ENCODE measurements at regions of chr19 and their contacts with region 1.

Region 1: GRCh38 chr19:45446941-45447340 is 20.9 kb upstream of the FOSB start:
- DNase-seq: peak; percentile 91
- H3K27ac ChIP-seq: peak overlapping the region; percentile 100
- CTCF ChIP-seq: no peak

Region 2: GRCh38 chr19:45469132-45469944 is 22.4 kb after region 1 on chr19:
- CTCF ChIA-PET with region 1: interaction called, 3 read pairs
- POLR2A ChIA-PET with region 1: interaction called, 11 read pairs
- DNase-seq: peak; percentile 94
- H3K27ac ChIP-seq: peak overlapping the region; percentile 96
- CTCF ChIP-seq: no peak

Region 3: DNA sequence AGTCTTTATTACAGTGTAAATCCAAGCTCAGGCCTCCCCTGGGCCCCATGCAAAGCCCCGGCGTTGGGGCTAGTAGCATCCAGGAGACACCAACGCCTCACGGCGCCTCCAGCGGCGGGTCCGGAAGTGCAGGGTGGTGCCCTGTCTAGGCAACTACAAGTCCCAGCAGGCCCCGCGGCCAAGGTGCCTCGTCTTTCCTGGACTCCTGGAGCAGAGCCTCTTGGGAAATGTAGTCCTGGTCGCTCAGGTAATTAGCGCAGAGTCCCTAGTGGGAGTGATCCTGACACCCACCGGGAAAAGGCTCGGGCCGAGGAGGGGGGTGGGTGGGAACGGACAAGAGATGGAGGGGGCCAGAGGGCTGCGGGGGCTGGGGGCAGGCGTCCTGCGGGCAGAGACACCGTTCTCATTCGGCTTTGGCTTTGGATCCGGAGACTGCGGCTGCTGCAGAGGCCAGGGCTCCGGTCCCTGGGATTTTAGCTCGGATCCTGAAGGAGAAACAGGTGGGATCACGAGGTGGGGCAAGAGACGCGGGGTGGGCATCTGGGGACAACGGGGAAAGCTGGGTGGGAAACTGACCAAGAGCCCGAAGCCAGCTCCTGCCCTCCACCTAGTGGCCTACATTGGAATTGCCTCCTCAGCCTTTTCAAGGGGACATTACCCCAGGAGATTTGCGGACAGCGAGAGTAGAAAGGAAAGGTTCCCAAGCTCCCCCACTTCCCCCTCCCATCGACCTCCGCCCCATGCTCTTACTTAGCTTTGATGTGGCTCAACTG is 38.5 kb after region 1 on chr19:
- CTCF ChIA-PET with region 1: no interaction called
- POLR2A ChIA-PET with region 1: no interaction called
- DNase-seq: peak; percentile 80
- H3K27ac ChIP-seq: peak overlapping the region; percentile 86
- CTCF ChIP-seq: peak; percentile 89

Measured in RWPE1 (cell line).